AG04449 (cell line): ENCODE measurements at regions of chr2 and their contacts with region 1.

Region 1: GRCh38 chr2:8836971-8837794 is at the start of gene KIDINS220:
- DNase-seq: no peak
- H3K4me3 ChIP-seq: peak within 1 kb of the TSS; percentile 98
- CTCF ChIP-seq: no peak

Region 2: DNA sequence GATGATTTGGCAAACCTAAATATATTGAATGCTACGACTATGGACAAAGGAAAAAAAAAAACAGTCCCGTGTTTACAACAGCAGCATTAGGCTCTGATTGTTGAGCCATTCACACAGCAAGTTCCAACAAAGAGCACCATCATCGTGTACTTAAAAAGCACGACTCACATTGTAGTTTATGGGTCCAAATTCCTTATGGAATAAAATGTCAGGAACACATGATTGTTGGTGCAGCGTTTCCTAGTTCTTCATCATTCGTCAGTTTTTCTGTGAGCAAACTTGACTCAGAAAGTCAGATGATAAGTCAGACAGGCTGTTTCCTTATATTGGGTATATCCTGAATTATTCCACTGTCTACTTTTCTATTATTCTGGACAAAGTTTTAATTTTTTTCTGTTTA is 10.2 kb after region 1 on chr2:
- CTCF ChIA-PET with region 1: interaction called, 10 read pairs
- POLR2A ChIA-PET with region 1: no interaction called
- DNase-seq: no peak
- H3K4me3 ChIP-seq: no peak overlapping the region
- CTCF ChIP-seq: no peak

Region 3: DNA sequence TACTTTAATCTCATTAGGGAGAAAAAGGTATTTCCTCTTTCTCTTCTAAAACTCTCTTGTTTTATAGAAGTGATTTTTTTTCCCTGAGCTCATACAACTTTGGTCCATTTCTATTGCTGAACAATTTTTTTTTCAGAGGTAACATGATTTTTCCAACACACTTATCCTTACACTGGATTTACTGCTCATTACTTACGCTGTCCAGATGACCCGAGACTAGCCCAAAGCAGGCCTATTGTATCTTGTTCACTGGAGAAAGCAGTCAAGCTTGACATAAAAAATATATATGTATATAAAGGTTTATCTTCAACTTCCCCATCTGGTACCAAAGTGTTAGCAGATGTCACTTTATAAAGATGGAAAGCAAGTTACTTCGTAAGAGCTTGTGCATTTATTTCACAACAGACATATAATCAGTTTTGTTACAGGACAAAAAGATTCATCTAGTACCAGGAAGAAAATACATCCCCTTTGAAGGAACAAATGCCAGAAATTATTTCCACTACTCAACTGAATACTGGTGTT is 70.6 kb after region 1 on chr2:
- CTCF ChIA-PET with region 1: no interaction called
- POLR2A ChIA-PET with region 1: no interaction called
- DNase-seq: no peak
- H3K4me3 ChIP-seq: no peak overlapping the region
- CTCF ChIP-seq: no peak

Region 4: DNA sequence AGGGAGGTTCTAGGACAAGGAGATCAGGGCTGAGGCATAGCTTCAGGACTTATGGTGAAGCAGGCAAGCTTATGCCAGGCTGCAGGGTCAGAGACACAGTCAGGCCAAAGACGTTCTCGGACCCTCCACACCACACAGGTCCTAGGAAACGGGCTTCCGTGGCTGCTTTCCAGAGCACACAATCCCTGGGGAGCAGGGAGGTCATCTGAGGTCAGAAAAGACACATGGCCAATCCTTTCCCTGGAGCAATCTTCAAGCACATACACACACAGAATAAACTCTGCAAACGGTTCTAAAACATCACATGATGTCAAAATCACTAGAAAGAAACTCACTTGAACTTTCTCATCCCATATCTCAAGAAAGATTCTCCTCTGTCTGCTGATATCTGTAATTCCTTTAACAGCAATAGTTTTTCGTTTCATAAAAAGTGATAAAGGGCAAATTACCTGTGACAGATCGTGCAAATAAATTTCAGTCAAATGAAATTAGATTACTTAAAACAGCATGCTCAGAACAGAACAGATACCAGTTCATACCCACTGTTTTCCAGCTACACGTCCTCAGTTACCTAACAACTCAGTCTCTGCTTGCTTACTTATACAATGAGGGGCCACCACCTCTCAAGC is 102.4 kb after region 1 on chr2:
- CTCF ChIA-PET with region 1: no interaction called
- POLR2A ChIA-PET with region 1: no interaction called
- DNase-seq: no peak
- H3K4me3 ChIP-seq: no peak overlapping the region
- CTCF ChIP-seq: no peak